Naive thymus-derived CD4-positive, alpha-beta T cell (primary cell): ENCODE measurements at regions of chr2 and their contacts with region 1.

Region 1: DNA sequence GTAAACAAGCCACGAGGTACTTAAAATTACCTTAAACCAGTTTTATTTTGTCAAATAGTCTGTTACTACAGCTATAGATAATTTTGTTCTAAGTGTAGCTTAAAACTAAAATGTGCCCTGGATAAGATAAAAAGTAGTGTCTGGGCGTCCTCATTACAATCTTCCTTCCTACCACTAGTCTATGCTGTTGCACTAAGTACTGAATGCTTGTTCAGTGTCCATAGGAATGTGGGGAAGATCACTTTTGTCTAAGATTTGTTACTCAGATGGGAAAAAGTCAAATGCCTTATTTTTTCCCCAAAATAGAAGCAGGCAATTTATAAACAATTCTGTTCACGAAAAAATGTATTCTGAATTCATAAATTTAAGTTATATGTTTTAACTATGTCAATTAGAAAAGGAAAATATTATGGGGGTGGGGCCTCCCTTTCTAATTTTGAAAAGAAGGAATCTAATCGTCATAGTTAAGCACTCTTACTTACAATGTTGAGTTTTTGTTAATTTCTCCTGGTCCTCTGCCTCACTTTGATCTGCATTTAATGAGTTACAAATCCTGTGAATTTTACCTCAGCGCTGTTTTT is 140.4 kb upstream of the VRK2 start:
- DNase-seq: peak in 3 of 9 donors; percentile 2 to 18 (median 3)
- ATAC-seq: peak; percentile 67
- H3K4me3 ChIP-seq: no peak overlapping the region
- H3K4me3 Mint-ChIP-seq: no peak overlapping the region
- H3K27ac ChIP-seq: no peak overlapping the region
- H3K27ac Mint-ChIP-seq: no peak overlapping the region
- H3K4me1 ChIP-seq: no peaks in the 10 kb centered on the region
- H3K4me1 Mint-ChIP-seq: peaks cover 0 to 22% (median 4%) of the 10 kb centered on the region in 7 donors
- H3K27me3 ChIP-seq: no peaks in the 10 kb centered on the region
- H3K27me3 Mint-ChIP-seq: peaks cover 0 to 6% (median 0%) of the 10 kb centered on the region in 5 donors

Region 2: DNA sequence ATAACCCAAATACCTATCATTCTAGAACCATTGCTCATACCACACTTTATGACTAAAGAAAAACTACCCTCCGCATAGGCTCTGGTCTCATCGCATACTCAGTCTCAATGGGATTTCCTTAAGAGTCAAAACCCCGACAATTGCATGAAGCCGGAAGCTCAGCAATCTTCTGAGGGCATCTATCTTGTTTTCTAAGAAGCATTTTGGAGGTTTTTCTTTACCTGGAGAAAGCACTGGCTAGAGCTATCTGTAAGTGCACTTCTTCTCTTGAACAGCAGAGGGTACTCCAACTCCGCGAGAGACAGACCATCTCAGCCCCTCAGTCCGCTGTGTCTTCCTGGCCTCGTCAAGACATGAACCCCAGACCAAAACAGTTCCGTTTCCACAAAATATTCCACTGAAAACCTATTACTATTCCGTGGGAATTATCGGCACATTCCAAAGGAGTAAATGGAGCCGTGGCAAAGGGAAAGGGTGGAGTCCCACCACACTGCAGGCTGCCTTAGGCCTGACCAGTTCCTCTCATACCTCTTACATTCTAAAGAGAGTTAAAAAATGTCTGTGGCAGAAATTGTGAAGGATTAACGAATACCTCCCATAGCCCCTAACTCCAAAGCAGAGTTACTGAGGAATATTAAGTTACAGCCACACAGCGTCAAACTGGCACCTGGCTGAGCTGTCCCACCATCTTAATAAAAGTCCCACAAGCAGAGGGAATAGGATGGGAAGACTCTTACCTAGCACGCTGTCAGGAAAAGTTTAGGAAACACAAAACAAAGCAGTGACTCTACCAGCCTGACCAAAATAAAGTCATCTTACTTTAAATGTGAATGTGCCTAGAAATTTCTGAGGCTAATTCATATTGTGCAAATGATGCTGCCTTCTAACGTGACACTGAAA is 185.3 kb before region 1 on chr2:
- CTCF ChIA-PET with region 1: interaction called, 5 read pairs
- POLR2A ChIA-PET with region 1: no interaction called
- intact Hi-C with region 1: loop called in 1 of 2 experiments (anchors 5 kb)
- DNase-seq: peak in 6 of 9 donors; percentile 10 to 39 (median 30)
- ATAC-seq: peak; percentile 77
- H3K4me3 ChIP-seq: no peak overlapping the region
- H3K4me3 Mint-ChIP-seq: peak overlapping the region in 6 of 10 donors; percentile 47 to 75 (median 60)
- H3K27ac ChIP-seq: no peak overlapping the region
- H3K27ac Mint-ChIP-seq: peak overlapping the region in 1 of 9 donors; percentile 8
- H3K4me1 ChIP-seq: no peaks in the 10 kb centered on the region
- H3K4me1 Mint-ChIP-seq: peaks cover 3 to 12% (median 6%) of the 10 kb centered on the region in 7 donors
- H3K27me3 ChIP-seq: no peaks in the 10 kb centered on the region
- H3K27me3 Mint-ChIP-seq: peaks cover 0 to 16% (median 7%) of the 10 kb centered on the region in 5 donors

Region 3: GRCh38 chr2:57936216-57936615 is 30.0 kb after region 1 on chr2:
- CTCF ChIA-PET with region 1: no interaction called
- POLR2A ChIA-PET with region 1: no interaction called
- intact Hi-C with region 1: no loop called
- DNase-seq: no peak
- ATAC-seq: no peak
- H3K4me3 ChIP-seq: no peak overlapping the region
- H3K4me3 Mint-ChIP-seq: no peak overlapping the region
- H3K27ac ChIP-seq: no peak overlapping the region
- H3K27ac Mint-ChIP-seq: no peak overlapping the region
- H3K4me1 ChIP-seq: no peaks in the 10 kb centered on the region
- H3K4me1 Mint-ChIP-seq: no peaks in the 10 kb centered on the region
- H3K27me3 ChIP-seq: no peaks in the 10 kb centered on the region
- H3K27me3 Mint-ChIP-seq: peaks cover 0 to 12% (median 0%) of the 10 kb centered on the region in 5 donors

Region 4: GRCh38 chr2:58046585-58047372 is 140.5 kb after region 1 on chr2 and contains the start of gene VRK2:
- CTCF ChIA-PET with region 1: no interaction called
- POLR2A ChIA-PET with region 1: no interaction called
- intact Hi-C with region 1: loop called in 1 of 2 experiments (anchors 5 kb)
- DNase-seq: peak; percentile 72 to 86 (median 85)
- ATAC-seq: peak; percentile 94
- H3K4me3 ChIP-seq: peak within 1 kb of the TSS; percentile 67
- H3K4me3 Mint-ChIP-seq: peak within 1 kb of the TSS; percentile 87 to 94 (median 92)
- H3K27ac ChIP-seq: peak within 1 kb of the TSS; percentile 84
- H3K27ac Mint-ChIP-seq: peak within 1 kb of the TSS; percentile 91 to 97 (median 94)
- H3K4me1 ChIP-seq: peaks cover 18 to 20% of the 10 kb centered on the region in 2 donors
- H3K4me1 Mint-ChIP-seq: peaks cover 27 to 55% (median 51%) of the 10 kb centered on the region in 7 donors
- H3K27me3 ChIP-seq: no peaks in the 10 kb centered on the region
- H3K27me3 Mint-ChIP-seq: no peaks in the 10 kb centered on the region
- total RNA-seq, gene VRK2: 13.1 to 24.5 (median 14.1) TPM

Region 5: GRCh38 chr2:58240670-58241545 is 334.7 kb after region 1 on chr2 and contains the start of gene FANCL:
- CTCF ChIA-PET with region 1: no interaction called
- POLR2A ChIA-PET with region 1: no interaction called
- intact Hi-C with region 1: loop called in 1 of 2 experiments (anchors 10 kb)
- DNase-seq: peak; percentile 21 to 83 (median 42)
- ATAC-seq: peak; percentile 76
- H3K4me3 ChIP-seq: peak within 1 kb of the TSS; percentile 68
- H3K4me3 Mint-ChIP-seq: peak within 1 kb of the TSS; percentile 92 to 99 (median 93)
- H3K27ac ChIP-seq: peak within 1 kb of the TSS; percentile 1
- H3K27ac Mint-ChIP-seq: peak within 1 kb of the TSS; percentile 28 to 89 (median 68)
- H3K4me1 ChIP-seq: peaks cover 0 to 4% of the 10 kb centered on the region in 2 donors
- H3K4me1 Mint-ChIP-seq: peaks cover 3 to 34% (median 15%) of the 10 kb centered on the region in 7 donors
- H3K27me3 ChIP-seq: no peaks in the 10 kb centered on the region
- H3K27me3 Mint-ChIP-seq: peaks cover 5 to 16% (median 13%) of the 10 kb centered on the region in 5 donors
- total RNA-seq, gene FANCL: 1.9 to 14.5 (median 4.0) TPM

Region 6: DNA sequence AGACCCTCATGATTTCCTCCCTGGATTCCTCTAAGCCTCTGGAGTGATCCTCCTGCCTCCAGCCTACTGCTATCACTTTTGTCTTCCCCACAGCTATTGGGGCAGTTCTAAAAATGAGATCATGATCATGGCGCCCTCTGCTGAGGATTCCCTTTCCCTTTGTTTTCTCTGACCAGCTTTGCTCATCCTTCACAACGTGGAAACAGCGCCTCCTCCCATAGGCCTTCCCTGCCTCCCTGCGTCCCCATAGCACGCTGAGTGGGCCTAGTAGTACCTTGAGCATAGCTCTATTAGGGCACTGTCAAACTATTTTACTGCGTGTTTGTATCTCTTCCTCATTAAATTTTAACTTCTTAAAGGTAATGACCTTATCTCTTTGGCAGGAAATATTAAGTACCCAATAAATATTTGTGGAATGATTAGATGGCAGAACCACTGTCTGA is 541.8 kb after region 1 on chr2:
- CTCF ChIA-PET with region 1: no interaction called
- POLR2A ChIA-PET with region 1: no interaction called
- intact Hi-C with region 1: loop called (anchors 1 to 5 kb)
- DNase-seq: no peak
- ATAC-seq: peak; percentile 22
- H3K4me3 ChIP-seq: no peak overlapping the region
- H3K4me3 Mint-ChIP-seq: no peak overlapping the region
- H3K27ac ChIP-seq: no peak overlapping the region
- H3K27ac Mint-ChIP-seq: no peak overlapping the region
- H3K4me1 ChIP-seq: no peaks in the 10 kb centered on the region
- H3K4me1 Mint-ChIP-seq: no peaks in the 10 kb centered on the region
- H3K27me3 ChIP-seq: no peaks in the 10 kb centered on the region
- H3K27me3 Mint-ChIP-seq: peaks cover 6 to 16% (median 15%) of the 10 kb centered on the region in 5 donors

Region 7: DNA sequence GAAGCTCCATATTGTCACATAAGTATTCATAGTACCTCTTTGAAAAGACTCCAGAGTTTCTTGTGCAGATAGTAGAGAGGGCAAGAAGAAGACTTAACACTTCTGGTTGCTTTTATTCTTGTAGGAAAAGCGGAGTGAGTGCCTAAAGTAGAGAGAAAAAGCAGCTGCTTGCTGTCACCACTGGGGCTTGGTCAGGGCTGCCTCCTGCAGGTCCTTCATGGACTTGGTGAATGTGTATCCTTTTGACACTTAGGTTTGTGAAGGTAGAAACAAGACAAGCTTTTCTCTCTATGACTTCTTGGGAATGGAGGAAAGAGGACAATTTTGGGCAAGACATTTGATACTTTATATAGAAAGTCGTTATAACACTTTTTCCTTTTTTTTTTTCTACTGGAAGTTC is 647.7 kb after region 1 on chr2:
- CTCF ChIA-PET with region 1: no interaction called
- POLR2A ChIA-PET with region 1: no interaction called
- intact Hi-C with region 1: loop called in 1 of 2 experiments (anchors 10 kb)
- DNase-seq: no peak
- ATAC-seq: no peak
- H3K4me3 ChIP-seq: no peak overlapping the region
- H3K4me3 Mint-ChIP-seq: no peak overlapping the region
- H3K27ac ChIP-seq: no peak overlapping the region
- H3K27ac Mint-ChIP-seq: no peak overlapping the region
- H3K4me1 ChIP-seq: no peaks in the 10 kb centered on the region
- H3K4me1 Mint-ChIP-seq: no peaks in the 10 kb centered on the region
- H3K27me3 ChIP-seq: no peaks in the 10 kb centered on the region
- H3K27me3 Mint-ChIP-seq: peaks cover 0 to 5% (median 3%) of the 10 kb centered on the region in 5 donors

Region 8: GRCh38 chr2:58680755-58681310 is 774.6 kb after region 1 on chr2:
- CTCF ChIA-PET with region 1: no interaction called
- POLR2A ChIA-PET with region 1: no interaction called
- intact Hi-C with region 1: loop called in 1 of 2 experiments (anchors 5 kb)
- DNase-seq: no peak
- ATAC-seq: no peak
- H3K4me3 ChIP-seq: no peak overlapping the region
- H3K4me3 Mint-ChIP-seq: no peak overlapping the region
- H3K27ac ChIP-seq: no peak overlapping the region
- H3K27ac Mint-ChIP-seq: no peak overlapping the region
- H3K4me1 ChIP-seq: no peaks in the 10 kb centered on the region
- H3K4me1 Mint-ChIP-seq: no peaks in the 10 kb centered on the region
- H3K27me3 ChIP-seq: no peaks in the 10 kb centered on the region
- H3K27me3 Mint-ChIP-seq: peaks cover 0 to 5% (median 3%) of the 10 kb centered on the region in 5 donors